HCT116 (cell line): ENCODE measurements at regions of chr16 and their contacts with region 1.

Region 1: GRCh38 chr16:89615596-89616090 is 2.2 kb downstream of the DPEP1 start:
- DNase-seq: no peak
- ATAC-seq: peak; percentile 85
- H3K4me3 ChIP-seq: no peak overlapping the region
- H3K27ac ChIP-seq: no peak overlapping the region
- H3K4me1 ChIP-seq: peaks cover 7 to 15% of the 10 kb centered on the region in 2 experiments; a peak in 3 of 4 replicates
- H3K27me3 ChIP-seq: no peaks in the 10 kb centered on the region
- CTCF ChIP-seq: peak; percentile 77 to 94 (median 93)
- POLR2A ChIP-seq: no peak
- RAD21 ChIP-seq: no peak; the same call in 1 of the 2 replicates

Region 2: DNA sequence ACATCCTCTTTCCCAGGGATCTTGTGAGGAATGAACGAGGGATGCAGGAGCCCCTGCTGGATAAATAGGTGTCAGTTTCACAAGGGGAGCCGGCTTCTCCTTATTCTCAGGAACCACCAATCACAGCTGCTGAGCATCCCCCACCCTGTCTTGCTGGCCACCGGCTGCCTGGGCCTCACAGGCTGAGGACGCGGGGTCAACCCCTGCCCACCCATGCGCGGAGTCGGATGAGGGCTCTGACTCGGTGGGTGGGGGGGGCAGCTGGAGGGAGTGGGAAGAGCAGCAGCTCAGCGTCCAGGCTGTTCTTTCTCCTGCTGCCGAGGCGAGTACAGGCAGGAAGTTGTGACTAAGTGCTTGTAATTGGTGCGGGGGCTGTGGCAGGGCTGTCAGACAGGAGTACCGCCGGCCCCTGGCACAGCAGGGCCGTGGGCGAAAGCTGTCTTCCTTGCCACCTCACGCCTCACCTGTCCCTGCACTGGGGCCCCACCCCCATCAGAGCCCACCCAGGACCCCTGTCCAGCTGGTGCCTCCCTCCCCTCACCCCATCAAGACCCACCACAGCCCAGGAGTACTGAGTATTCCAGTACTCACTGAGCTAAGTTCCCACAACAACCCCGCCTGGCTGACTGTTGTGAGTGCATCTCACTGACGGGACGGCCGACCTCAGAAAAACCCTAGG is 13.2 kb before region 1 on chr16:
- CTCF ChIA-PET with region 1: interaction called, 17 read pairs
- POLR2A ChIA-PET with region 1: interaction called, 3 read pairs
- RAD21 ChIA-PET with region 1: interaction called in 1 of 2 experiments, 3 read pairs
- intact Hi-C with region 1: no loop called
- DNase-seq: peak; percentile 24
- ATAC-seq: peak; percentile 71
- H3K4me3 ChIP-seq: peak overlapping the region; percentile 19 to 49
- H3K27ac ChIP-seq: peak overlapping the region; percentile 43
- H3K4me1 ChIP-seq: peaks cover 28 to 52% of the 10 kb centered on the region in 2 experiments
- H3K27me3 ChIP-seq: no peaks in the 10 kb centered on the region
- CTCF ChIP-seq: no peak
- POLR2A ChIP-seq: no peak
- RAD21 ChIP-seq: no peak

Region 3: DNA sequence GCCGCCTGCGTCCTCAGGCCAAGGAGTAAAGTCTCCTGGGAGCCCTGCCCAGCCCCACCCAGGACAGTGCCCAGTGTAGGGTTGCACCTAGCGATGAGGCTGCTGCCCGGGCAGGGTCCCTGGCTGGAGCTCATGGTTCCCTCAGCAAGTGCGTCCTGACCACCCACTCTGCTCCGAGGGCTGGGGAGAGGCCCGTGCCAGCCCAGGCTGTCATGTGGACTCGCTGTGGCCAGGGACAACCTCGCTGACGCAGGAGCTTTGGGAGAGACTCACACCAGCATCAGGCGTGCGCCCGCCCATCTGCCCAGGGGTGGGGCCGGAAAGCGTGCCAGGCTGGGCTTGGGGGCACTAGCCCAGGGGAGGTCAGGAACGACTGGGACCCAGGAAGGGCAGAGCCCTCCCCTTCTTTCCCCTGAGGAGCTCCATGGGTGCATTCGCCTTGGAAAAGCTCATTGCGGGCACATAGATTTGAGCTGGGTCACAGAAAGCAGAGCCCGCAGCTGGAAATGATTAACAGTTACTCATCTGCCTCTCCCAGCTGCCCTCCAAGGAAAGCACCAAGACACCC is 17.5 kb after region 1 on chr16:
- CTCF ChIA-PET with region 1: interaction called, 16 read pairs
- POLR2A ChIA-PET with region 1: no interaction called
- RAD21 ChIA-PET with region 1: no interaction called
- intact Hi-C with region 1: no loop called
- DNase-seq: peak; percentile 21
- ATAC-seq: peak; percentile 81
- H3K4me3 ChIP-seq: peak overlapping the region; percentile 24 to 41
- H3K27ac ChIP-seq: no peak overlapping the region; the same call in 1 of the 2 replicates
- H3K4me1 ChIP-seq: peaks cover 13 to 22% of the 10 kb centered on the region in 2 experiments
- H3K27me3 ChIP-seq: peaks cover 17% of the 10 kb centered on the region
- CTCF ChIP-seq: no peak
- POLR2A ChIP-seq: no peak
- RAD21 ChIP-seq: no peak